ENCODE measurements at regions of chr5 and their contacts with region 1.

Region 1: GRCh38 chr5:76771705-76772405 is 47.0 kb upstream of the F2RL1 start:
- DNase-seq: no peak
- ATAC-seq: no peak

Region 2: DNA sequence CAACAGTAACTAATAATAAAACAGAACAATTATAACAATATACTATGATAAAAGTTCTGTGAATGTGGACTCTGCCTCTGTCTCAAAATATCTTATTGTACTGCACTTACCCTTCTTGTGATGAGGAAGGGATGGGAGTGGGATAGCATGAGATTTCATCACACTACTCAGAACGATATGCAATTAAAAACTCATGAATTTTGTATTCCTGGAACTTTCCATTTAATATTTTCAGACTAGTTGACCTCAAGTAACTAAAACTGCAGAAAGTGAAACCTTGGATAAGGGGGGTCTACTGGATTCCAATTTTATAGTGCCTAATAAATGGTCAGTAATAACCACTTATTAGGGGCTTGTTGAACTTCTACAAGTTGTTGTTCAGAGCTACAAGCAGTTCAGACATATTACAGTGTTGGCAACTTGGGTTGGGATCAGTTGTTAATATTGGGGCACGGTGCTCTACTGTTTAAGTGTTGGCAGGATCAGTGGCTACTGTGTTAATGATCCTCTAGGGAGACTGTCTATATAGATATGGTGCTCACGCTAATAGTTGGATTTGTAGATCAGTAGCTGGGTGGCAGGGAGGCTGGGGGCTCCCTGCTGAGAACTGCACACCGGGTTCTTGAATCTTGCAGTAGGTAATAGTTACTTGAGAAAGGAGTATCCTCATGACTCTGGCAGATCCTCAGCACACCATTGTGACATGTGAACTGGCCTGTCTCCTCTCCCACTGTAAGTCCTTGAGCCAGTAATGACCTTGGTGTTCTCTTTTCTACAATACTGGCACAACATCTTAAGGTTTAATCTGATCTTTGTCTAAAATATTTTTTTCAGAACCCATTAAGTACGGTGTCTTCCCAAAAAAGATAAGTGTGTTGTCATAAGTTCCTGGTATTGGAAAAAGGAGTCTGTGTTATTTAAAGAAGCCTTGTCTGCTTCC is 210.6 kb before region 1 on chr5:
- intact Hi-C with region 1: no loop called
- DNase-seq: no peak
- ATAC-seq: no peak

Region 3: DNA sequence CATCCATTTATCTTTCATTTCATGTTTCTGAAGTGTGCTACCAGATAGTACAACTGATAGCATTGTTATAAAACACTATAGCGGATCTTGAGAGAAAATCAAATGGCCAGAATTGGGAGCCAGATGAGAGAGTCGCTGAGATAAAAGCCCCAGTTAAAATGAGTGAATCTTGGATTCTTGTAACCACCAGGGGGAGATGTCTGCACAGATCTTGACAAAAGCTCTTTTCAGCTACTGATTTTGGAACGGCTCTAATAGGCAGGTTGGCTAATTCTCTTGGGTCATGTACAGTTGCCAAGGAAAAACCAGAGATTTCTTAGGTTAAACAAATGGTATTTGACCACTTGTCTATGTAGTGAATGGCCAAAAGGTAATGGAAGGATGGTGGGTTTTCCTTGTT is 170.4 kb before region 1 on chr5:
- intact Hi-C with region 1: loop called (anchors 5 kb)
- DNase-seq: no peak
- ATAC-seq: peak; percentile 65

Measured in left ventricle myocardium superior (tissue), 1 donor.